Right ventricle myocardium inferior (tissue), 1 donor: ENCODE measurements at regions of chr2 and their contacts with region 1.

Region 1: DNA sequence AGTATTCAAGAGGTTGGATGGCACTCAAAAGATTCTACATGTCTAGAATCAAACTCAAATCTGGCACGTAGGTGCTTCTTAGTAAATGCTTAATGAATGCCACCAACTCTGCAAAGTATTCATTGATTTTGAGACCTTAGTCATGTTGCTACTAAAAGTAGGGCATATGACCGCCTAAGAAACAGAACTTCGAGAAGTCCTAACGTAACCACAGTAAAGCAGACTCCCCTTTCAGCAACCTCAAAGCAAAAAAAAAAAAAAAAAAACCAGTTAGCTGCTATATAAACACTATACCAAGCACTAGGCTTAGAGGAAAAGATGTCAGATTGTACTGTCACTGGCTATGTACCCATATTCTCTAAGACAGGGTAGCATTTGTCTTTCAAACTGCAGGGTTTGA is 33.9 kb downstream of the PTCD3 start:
- DNase-seq: no peak
- ATAC-seq: no peak

Region 2: GRCh38 chr2:86176597-86176996 is 36.6 kb after region 1 on chr2:
- intact Hi-C with region 1: loop called (anchors 5 kb)
- DNase-seq: no peak
- ATAC-seq: no peak